Motor neuron (in vitro differentiated cells): ENCODE measurements at regions of chr7 and their contacts with region 1.

Region 1: GRCh38 chr7:106736508-106737201 is 75.7 kb upstream of the CCDC71L start:
- ATAC-seq: peak; percentile 45 to 95 (median 56)
- H3K4me3 ChIP-seq: no peak overlapping the region
- H3K27ac ChIP-seq: no peak overlapping the region
- H3K4me1 ChIP-seq: no peaks in the 10 kb centered on the region

Region 2: GRCh38 chr7:106176414-106177299 is 560.0 kb before region 1 on chr7:
- in situ Hi-C with region 1: loop called in 1 of 9 experiments (anchors 25 kb)
- ATAC-seq: peak; percentile 63 to 99 (median 94)
- H3K4me3 ChIP-seq: no peak overlapping the region
- H3K27ac ChIP-seq: no peak overlapping the region
- H3K4me1 ChIP-seq: peaks cover 0 to 4% of the 10 kb centered on the region in 2 donors

Region 3: GRCh38 chr7:106239404-106239803 is 497.3 kb before region 1 on chr7:
- in situ Hi-C with region 1: no loop called
- ATAC-seq: peak in 3 of 8 experiments; percentile 19 to 97 (median 37)
- H3K4me3 ChIP-seq: no peak overlapping the region
- H3K27ac ChIP-seq: no peak overlapping the region
- H3K4me1 ChIP-seq: no peaks in the 10 kb centered on the region

Region 4: GRCh38 chr7:106659963-106660861 is 76.4 kb before region 1 on chr7:
- in situ Hi-C with region 1: loop called in 1 of 9 experiments (anchors 10 kb)
- ATAC-seq: peak; percentile 44 to 73 (median 64)
- H3K4me3 ChIP-seq: peak overlapping the region; percentile 53 to 86 (median 71)
- H3K27ac ChIP-seq: peak overlapping the region; percentile 82 to 87
- H3K4me1 ChIP-seq: peaks cover 4 to 17% of the 10 kb centered on the region in 2 donors

Region 5: GRCh38 chr7:107035446-107035845 is 298.8 kb after region 1 on chr7:
- in situ Hi-C with region 1: no loop called
- ATAC-seq: peak in 7 of 8 experiments; percentile 78 to 99 (median 86)
- H3K4me3 ChIP-seq: no peak overlapping the region
- H3K27ac ChIP-seq: no peak overlapping the region
- H3K4me1 ChIP-seq: no peaks in the 10 kb centered on the region